CD4-positive, alpha-beta memory T cell (primary cell): ENCODE measurements at regions of chr17 and their contacts with region 1.

Region 1: GRCh38 chr17:72618001-72618509 is 474.4 kb downstream of the SLC39A11 start:
- DNase-seq: peak; percentile 57 to 86 (median 63)
- H3K4me3 ChIP-seq: peak overlapping the region; percentile 11 to 39
- H3K4me3 Mint-ChIP-seq: peak overlapping the region; percentile 72 to 90 (median 82)
- H3K27ac ChIP-seq: peak overlapping the region; percentile 51
- H3K27ac Mint-ChIP-seq: peak overlapping the region; percentile 65 to 91 (median 88)
- H3K4me1 ChIP-seq: peaks cover 24% of the 10 kb centered on the region
- H3K4me1 Mint-ChIP-seq: peaks cover 15 to 37% (median 22%) of the 10 kb centered on the region in 4 donors
- H3K27me3 ChIP-seq: no peaks in the 10 kb centered on the region
- H3K27me3 Mint-ChIP-seq: peaks cover 10 to 11% of the 10 kb centered on the region in 2 donors

Region 2: GRCh38 chr17:72592242-72592966 is 25.7 kb before region 1 on chr17:
- CTCF ChIA-PET with region 1: interaction called, 3 read pairs
- POLR2A ChIA-PET with region 1: interaction called, 18 read pairs
- intact Hi-C with region 1: no loop called
- DNase-seq: peak; percentile 58 to 75 (median 63)
- H3K4me3 ChIP-seq: peak overlapping the region; percentile 45 to 47
- H3K4me3 Mint-ChIP-seq: peak overlapping the region; percentile 88 to 95 (median 92)
- H3K27ac ChIP-seq: peak overlapping the region; percentile 38
- H3K27ac Mint-ChIP-seq: peak overlapping the region in 6 of 7 donors; percentile 23 to 93 (median 70)
- H3K4me1 ChIP-seq: peaks cover 27% of the 10 kb centered on the region
- H3K4me1 Mint-ChIP-seq: peaks cover 24 to 47% (median 34%) of the 10 kb centered on the region in 4 donors
- H3K27me3 ChIP-seq: peaks cover 4% of the 10 kb centered on the region
- H3K27me3 Mint-ChIP-seq: peaks cover 13 to 31% of the 10 kb centered on the region in 2 donors